ENCODE measurements at regions of chr4 and their contacts with region 1.

Region 1: GRCh38 chr4:140252742-140253555 is 99.0 kb upstream of the MAML3 start:
- H3K4me3 Mint-ChIP-seq: peak overlapping the region; percentile 70
- H3K27ac Mint-ChIP-seq: peak overlapping the region; percentile 65
- H3K4me1 Mint-ChIP-seq: peaks cover 28% of the 10 kb centered on the region
- H3K27me3 Mint-ChIP-seq: peaks cover 11% of the 10 kb centered on the region

Region 2: GRCh38 chr4:139734875-139735380 is 518.0 kb before region 1 on chr4:
- intact Hi-C with region 1: loop called (anchors 5 kb)
- H3K4me3 Mint-ChIP-seq: peak overlapping the region; percentile 71
- H3K27ac Mint-ChIP-seq: peak overlapping the region; percentile 49
- H3K4me1 Mint-ChIP-seq: peaks cover 40% of the 10 kb centered on the region
- H3K27me3 Mint-ChIP-seq: peaks cover 10% of the 10 kb centered on the region

Region 3: GRCh38 chr4:140144917-140145316 is 108.0 kb before region 1 on chr4:
- intact Hi-C with region 1: no loop called
- H3K4me3 Mint-ChIP-seq: no peak overlapping the region
- H3K27ac Mint-ChIP-seq: peak overlapping the region; percentile 13
- H3K4me1 Mint-ChIP-seq: peaks cover 25% of the 10 kb centered on the region
- H3K27me3 Mint-ChIP-seq: no peaks in the 10 kb centered on the region

Region 4: DNA sequence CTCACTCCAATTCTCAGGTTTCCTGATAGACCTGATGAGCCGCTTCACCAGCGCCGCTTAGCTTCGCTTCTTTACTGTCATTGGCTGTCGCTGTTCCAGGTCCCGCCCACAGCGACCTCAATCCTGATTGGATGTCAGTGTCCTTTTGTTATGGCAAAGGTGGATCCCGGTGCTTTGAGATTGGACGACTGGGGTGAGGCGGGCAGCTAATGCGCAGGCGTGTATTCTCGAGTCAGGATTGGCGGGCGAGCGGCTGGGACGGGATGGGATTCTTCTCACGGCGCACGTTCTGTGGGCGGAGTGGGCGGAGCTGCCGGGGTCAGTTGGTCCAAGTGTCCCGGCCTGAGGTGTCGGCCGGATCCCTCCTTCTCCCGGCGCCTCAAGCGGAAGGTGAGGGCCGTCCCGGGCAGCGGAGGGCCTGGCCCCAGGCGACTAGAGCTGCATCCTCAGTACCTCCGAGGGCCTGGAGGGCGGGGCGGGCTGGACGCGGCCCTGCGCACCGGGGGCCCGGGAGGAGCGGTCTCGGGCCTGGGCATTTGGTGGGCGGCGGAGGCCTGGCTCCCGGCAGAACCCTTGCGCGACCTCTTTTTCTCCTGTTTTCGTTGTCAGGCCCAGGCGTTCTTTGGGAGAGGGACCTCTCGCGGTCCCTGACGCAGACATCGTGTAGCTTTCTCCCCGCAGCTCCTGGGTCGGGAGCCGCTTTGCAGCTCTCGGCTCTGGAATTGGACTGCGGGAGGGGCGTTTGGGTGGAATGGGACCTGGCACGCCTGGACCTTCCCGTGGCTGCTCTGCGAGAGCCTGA is 120.6 kb after region 1 on chr4 and contains the start of gene SCOC:
- intact Hi-C with region 1: no loop called
- H3K4me3 Mint-ChIP-seq: no peak within 1 kb of the TSS
- H3K27ac Mint-ChIP-seq: no peak within 1 kb of the TSS
- H3K4me1 Mint-ChIP-seq: peaks cover 30% of the 10 kb centered on the region
- H3K27me3 Mint-ChIP-seq: no peaks in the 10 kb centered on the region